Endothelial cell of umbilical vein (primary cell): ENCODE measurements at regions of chr6 and their contacts with region 1.

Region 1: DNA sequence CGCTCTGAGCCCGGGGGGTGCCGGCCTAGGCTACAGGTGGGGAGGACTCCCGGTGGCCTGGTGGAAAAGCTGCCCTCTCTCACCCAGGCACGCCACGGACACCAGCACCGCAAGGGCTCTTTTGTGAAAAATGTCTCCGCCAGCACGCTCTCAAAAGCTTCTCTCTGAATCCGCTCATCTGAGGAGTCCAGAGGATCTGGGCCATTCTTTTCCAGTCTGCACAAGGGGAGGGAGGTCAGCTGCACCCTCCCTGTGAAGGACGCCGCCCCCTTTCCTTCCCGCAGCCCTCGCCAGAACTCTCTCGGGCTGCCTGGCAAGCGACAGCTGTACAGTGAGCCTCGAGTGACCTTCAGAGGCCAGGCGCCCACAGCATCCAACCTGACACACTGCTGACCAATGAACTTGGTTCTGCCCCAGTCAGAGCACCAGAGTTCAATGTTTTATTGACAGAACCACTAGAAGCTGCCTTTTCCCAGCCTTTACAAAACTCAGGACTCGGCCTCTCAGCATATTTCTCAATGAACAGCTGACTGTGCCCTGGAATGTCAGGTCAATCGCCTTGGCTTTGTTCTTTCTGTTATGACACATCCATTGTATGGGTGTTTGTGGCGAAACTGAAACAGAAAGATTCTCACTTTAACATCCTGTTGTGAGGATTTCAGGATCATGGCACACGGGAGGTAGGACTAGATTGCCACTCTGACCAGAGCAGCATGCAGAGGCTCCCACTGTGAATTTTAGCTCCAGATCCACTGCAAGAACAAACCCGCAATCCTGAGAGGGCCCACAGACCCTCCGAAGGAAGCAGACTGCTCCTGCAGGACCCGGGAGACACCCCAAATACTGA is 26.7 kb downstream of the SERPINB9 start:
- DNase-seq: peak; percentile 98
- H3K4me3 ChIP-seq: peak overlapping the region in 2 of 3 experiments; percentile 28 to 53
- H3K27ac ChIP-seq: peak overlapping the region; percentile 91
- H3K4me1 ChIP-seq: peaks cover 29% of the 10 kb centered on the region
- H3K27me3 ChIP-seq: no peaks in the 10 kb centered on the region
- CTCF ChIP-seq: no peak
- POLR2A ChIP-seq: peak; percentile 55

Region 2: GRCh38 chr6:2866181-2866846 is 10.1 kb before region 1 on chr6:
- CTCF ChIA-PET with region 1: interaction called, 10 read pairs
- POLR2A ChIA-PET with region 1: no interaction called
- dilution Hi-C with region 1: no loop called
- intact Hi-C with region 1: loop called (anchors 1 kb)
- DNase-seq: peak; percentile 36
- H3K4me3 ChIP-seq: no peak overlapping the region
- H3K27ac ChIP-seq: peak overlapping the region; percentile 65
- H3K4me1 ChIP-seq: peaks cover 12% of the 10 kb centered on the region
- H3K27me3 ChIP-seq: no peaks in the 10 kb centered on the region
- CTCF ChIP-seq: no peak
- POLR2A ChIP-seq: no peak

Region 3: GRCh38 chr6:2900821-2901644 is 24.6 kb after region 1 on chr6:
- CTCF ChIA-PET with region 1: interaction called, 5 read pairs
- POLR2A ChIA-PET with region 1: interaction called, 4 read pairs
- dilution Hi-C with region 1: no loop called
- intact Hi-C with region 1: loop called (anchors 1 kb)
- DNase-seq: peak; percentile 41
- H3K4me3 ChIP-seq: peak overlapping the region; percentile 22 to 91 (median 66)
- H3K27ac ChIP-seq: no peak overlapping the region
- H3K4me1 ChIP-seq: peaks cover 15% of the 10 kb centered on the region
- H3K27me3 ChIP-seq: no peaks in the 10 kb centered on the region
- CTCF ChIP-seq: no peak
- POLR2A ChIP-seq: no peak